AG04450 (cell line): ENCODE measurements at regions of chrX and their contacts with region 1.

Region 1: DNA sequence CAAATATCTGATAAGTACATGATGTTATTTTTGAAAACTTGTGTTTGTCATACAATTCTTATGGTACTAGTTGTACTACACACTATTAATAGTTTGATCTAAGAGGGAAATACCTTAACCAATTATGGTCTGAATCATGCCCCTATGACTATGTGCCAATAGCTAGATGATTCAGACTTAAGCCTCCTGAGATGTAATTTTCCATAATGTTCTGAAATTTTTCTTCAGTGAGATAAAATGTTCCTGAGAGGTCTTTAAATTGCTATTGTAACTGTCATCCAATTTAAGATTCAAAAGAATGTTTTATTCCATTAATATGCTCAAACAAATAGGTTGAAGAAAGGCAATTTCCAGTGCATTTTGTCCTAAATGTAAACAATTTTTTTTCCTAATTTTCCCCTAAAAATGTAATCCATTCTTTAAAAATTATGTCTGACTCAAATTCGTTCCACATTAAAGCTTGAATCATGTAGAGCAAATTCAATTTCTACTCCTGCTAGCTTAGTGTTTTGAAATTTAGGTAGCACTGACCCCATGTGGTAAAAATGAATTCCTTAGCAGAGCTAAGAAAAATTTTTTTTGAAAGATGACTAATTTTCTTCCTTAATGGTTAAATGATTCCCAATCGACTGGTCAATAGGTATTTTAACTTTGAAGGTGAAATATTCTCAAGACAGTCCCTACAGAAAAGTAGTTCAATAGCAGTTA is 49.1 kb downstream of the APOOL start:
- DNase-seq: peak; percentile 42
- H3K4me3 ChIP-seq: no peak overlapping the region
- H3K27ac ChIP-seq: no peak overlapping the region
- H3K27me3 ChIP-seq: no peaks in the 10 kb centered on the region
- CTCF ChIP-seq: peak; percentile 32; the same call in 1 of the 2 replicates

Region 2: DNA sequence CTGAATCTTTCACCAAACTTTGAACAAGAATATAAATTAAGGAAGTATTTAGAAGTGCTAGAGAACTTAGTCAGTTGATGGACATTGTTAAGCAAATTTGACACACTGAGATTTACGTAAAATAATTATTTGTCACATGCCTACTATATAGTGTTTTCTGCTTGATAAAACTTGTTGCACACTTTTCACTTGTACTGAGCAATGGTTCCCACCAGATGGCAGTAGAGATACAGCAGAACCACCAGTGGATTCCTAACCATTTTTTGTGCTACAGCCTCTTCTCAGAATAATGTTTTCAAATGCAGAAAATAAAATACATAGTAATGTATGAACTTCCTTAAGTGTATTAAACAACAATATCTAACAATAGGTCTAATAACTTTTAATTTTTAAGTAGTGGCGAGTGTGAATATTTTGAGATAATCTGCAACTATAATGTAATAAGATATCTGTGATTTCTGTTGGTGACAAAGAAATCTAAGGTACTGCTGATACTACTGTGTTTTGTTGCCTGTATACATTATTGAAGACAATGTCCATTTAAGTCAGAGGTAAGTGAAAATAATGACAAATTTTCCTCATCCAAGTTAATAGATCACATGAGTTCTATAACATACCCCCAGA is 32.1 kb after region 1 on chrX:
- CTCF ChIA-PET with region 1: interaction called, 19 read pairs
- POLR2A ChIA-PET with region 1: no interaction called
- DNase-seq: peak; percentile 8
- H3K4me3 ChIP-seq: no peak overlapping the region
- H3K27ac ChIP-seq: no peak overlapping the region
- H3K27me3 ChIP-seq: no peaks in the 10 kb centered on the region
- CTCF ChIP-seq: peak; percentile 79